A549 (cell line): ENCODE measurements at regions of chr7 and their contacts with region 1.

Region 1: GRCh38 chr7:78052112-78052511 is 253.5 kb downstream of the PHTF2 start:
- DNase-seq: no peak
- ATAC-seq: no peak
- H3K4me3 ChIP-seq: no peak overlapping the region
- H3K27ac ChIP-seq: no peak overlapping the region
- H3K4me1 ChIP-seq: no peaks in the 10 kb centered on the region
- CTCF ChIP-seq: no peak
- EP300 ChIP-seq: no peak
- POLR2A ChIP-seq: no peak
- RAD21 ChIP-seq: no peak

Region 2: GRCh38 chr7:78039790-78040776 is 12.0 kb before region 1 on chr7:
- CTCF ChIA-PET with region 1: interaction called, 15 read pairs
- POLR2A ChIA-PET with region 1: no interaction called
- DNase-seq: peak; percentile 36 to 38
- ATAC-seq: peak; percentile 79 to 98
- H3K4me3 ChIP-seq: no peak overlapping the region
- H3K27ac ChIP-seq: no peak overlapping the region
- H3K4me1 ChIP-seq: no peaks in the 10 kb centered on the region
- CTCF ChIP-seq: peak; percentile 69
- EP300 ChIP-seq: no peak
- POLR2A ChIP-seq: no peak
- RAD21 ChIP-seq: peak; percentile 55